Left cardiac atrium (tissue), 4 donors: ENCODE measurements at regions of chr11 and their contacts with region 1.

Region 1: GRCh38 chr11:101478587-101479369 is 105.0 kb downstream of the TRPC6 start:
- DNase-seq: no peak
- ATAC-seq: no peak

Region 2: GRCh38 chr11:101401245-101401644 is 77.5 kb before region 1 on chr11:
- intact Hi-C with region 1: no loop called
- DNase-seq: no peak
- ATAC-seq: no peak

Region 3: DNA sequence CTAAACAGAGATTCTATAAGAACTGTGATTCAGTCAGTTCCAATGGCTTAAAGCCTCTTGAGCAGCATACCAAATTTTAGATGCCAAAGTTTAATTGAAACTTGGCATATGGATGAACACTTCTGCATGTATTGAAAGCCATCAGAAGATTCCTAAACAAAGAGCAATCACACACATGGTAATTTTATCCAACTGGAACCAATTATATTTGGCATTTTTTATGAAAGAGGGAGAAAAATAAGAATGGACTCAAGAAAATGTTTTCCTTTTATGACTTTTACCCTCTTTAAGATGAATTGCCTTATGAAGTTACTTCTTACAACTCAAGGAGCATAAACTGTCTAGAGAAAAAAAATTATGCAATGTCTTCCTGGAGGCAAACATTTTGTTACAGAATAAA is 97.7 kb after region 1 on chr11:
- intact Hi-C with region 1: no loop called
- DNase-seq: no peak
- ATAC-seq: no peak

Region 4: GRCh38 chr11:101835506-101836063 is 356.8 kb after region 1 on chr11:
- intact Hi-C with region 1: loop called in 1 of 2 experiments (anchors 10 kb)
- DNase-seq: no peak
- ATAC-seq: no peak